CD4-positive, alpha-beta T cell (primary cell): ENCODE measurements at regions of chr14 and their contacts with region 1.

Region 1: GRCh38 chr14:89365061-89365801 is 51.8 kb downstream of the FOXN3 start:
- DNase-seq: peak; percentile 17 to 85 (median 44)
- ATAC-seq: peak; percentile 94
- H3K4me3 ChIP-seq: peak overlapping the region; percentile 27
- H3K4me3 Mint-ChIP-seq: peak overlapping the region; percentile 81
- H3K27ac ChIP-seq: peak overlapping the region; percentile 74 to 80
- H3K27ac Mint-ChIP-seq: peak overlapping the region; percentile 95
- H3K4me1 ChIP-seq: peaks cover 35% of the 10 kb centered on the region
- H3K4me1 Mint-ChIP-seq: peaks cover 62% of the 10 kb centered on the region
- H3K27me3 ChIP-seq: no peaks in the 10 kb centered on the region
- H3K27me3 Mint-ChIP-seq: no peaks in the 10 kb centered on the region
- CTCF ChIP-seq: no peak

Region 2: DNA sequence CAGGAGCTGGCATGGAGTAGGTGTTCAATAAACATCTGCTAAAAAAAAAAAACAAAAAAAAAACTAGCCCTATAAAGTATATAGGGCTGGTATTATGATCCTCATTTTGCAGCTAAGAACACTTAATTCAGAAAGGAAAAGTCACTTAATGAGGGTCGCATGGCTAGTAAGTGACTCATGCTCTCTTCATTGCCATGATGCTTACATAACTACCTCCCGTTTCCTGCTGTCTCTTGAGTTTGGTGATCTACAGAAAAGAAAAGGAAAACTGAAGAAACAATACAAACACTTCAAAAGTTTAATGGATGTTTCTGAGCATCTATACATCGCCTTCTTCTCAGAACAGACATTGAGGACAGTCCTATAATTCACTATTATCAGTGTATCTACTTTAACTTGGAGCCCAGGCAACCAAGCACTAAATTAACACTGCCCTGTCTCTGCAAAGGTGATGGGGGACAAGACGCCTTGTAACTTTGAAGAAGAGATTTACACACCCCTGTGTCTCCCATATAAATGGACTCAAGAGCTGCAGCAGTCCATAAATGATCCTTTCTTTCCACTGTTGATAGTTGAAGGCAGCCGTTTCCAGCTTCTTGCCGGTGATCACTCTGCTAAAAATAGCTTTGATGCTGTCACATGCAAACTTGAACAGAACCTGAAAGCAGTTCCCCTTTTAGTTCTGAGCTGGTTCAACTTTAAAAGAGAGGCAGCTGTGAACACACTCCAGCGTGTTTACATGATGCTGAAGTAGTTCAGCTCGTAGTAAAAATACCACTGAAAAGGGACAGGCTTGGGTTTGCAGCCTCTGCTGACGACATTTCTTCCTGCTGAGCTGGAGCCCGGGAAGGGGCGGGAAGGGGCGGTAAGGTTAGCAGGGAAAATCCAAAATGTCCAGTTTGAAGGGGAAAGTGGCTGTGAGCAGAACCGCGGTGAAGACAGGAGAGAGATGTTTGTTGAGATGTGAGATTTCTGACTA is 61.5 kb before region 1 on chr14:
- CTCF ChIA-PET with region 1: no interaction called
- POLR2A ChIA-PET with region 1: interaction called, 4 read pairs
- intact Hi-C with region 1: loop called in 1 of 2 experiments (anchors 2 kb)
- DNase-seq: peak in 4 of 14 experiments; percentile 10 to 59 (median 52)
- ATAC-seq: peak; percentile 75
- H3K4me3 ChIP-seq: no peak overlapping the region
- H3K4me3 Mint-ChIP-seq: peak overlapping the region; percentile 74
- H3K27ac ChIP-seq: peak overlapping the region in 1 of 2 donors; percentile 52
- H3K27ac Mint-ChIP-seq: peak overlapping the region; percentile 97
- H3K4me1 ChIP-seq: peaks cover 21% of the 10 kb centered on the region
- H3K4me1 Mint-ChIP-seq: peaks cover 73% of the 10 kb centered on the region
- H3K27me3 ChIP-seq: no peaks in the 10 kb centered on the region
- H3K27me3 Mint-ChIP-seq: no peaks in the 10 kb centered on the region
- CTCF ChIP-seq: no peak

Region 3: GRCh38 chr14:89351516-89352404 is 13.5 kb before region 1 on chr14:
- CTCF ChIA-PET with region 1: no interaction called
- POLR2A ChIA-PET with region 1: interaction called, 5 read pairs
- intact Hi-C with region 1: loop called in 1 of 2 experiments (anchors 2 kb)
- DNase-seq: peak in 3 of 14 experiments; percentile 16 to 54 (median 23)
- ATAC-seq: no peak
- H3K4me3 ChIP-seq: peak overlapping the region; percentile 1
- H3K4me3 Mint-ChIP-seq: peak overlapping the region; percentile 82
- H3K27ac ChIP-seq: peak overlapping the region; percentile 8 to 43
- H3K27ac Mint-ChIP-seq: peak overlapping the region; percentile 82
- H3K4me1 ChIP-seq: peaks cover 40% of the 10 kb centered on the region
- H3K4me1 Mint-ChIP-seq: peaks cover 66% of the 10 kb centered on the region
- H3K27me3 ChIP-seq: no peaks in the 10 kb centered on the region
- H3K27me3 Mint-ChIP-seq: no peaks in the 10 kb centered on the region
- CTCF ChIP-seq: no peak